ENCODE measurements at regions of chr4 and their contacts with region 1.

Region 1: DNA sequence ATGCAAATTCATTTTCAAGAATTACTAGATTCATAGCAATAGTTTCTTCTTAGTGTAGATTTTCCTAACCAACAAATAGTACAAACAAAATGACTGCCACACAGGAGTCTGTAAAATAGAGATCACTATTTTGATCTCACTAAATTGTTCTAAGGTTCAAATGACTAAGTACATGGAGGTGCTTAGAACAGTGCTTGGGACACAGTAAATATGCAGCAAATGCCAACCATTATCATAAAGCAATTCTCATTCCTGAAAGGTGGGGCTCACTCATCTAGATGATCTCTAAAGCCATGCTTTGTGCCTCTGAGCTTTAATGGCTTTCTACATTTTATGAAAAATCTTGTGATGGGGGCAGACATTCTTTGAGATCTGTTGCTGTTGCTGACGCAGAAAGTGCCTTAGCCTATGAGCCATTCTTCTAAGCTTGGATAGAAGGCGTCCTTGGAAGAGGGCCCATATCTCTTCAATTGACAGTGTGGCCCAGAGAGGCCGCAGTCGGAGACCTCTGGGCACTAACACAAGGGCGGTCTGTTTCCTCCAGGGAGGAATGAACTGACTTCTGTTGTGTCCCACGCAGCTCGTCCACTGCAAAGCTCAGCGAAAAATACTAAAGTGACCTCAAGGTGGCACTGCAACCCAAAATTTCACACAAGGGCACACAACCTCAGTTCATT is 23.5 kb downstream of the TLR10 start:
- DNase-seq: peak; percentile 84
- ATAC-seq: no peak
- H3K4me3 ChIP-seq: no peak overlapping the region
- H3K4me3 Mint-ChIP-seq: peak overlapping the region; percentile 26
- H3K27ac ChIP-seq: peak overlapping the region; percentile 6 to 11
- H3K27ac Mint-ChIP-seq: peak overlapping the region; percentile 83
- H3K4me1 ChIP-seq: peaks cover 59 to 70% of the 10 kb centered on the region in 2 donors
- H3K4me1 Mint-ChIP-seq: peaks cover 57% of the 10 kb centered on the region
- H3K27me3 ChIP-seq: no peaks in the 10 kb centered on the region
- H3K27me3 Mint-ChIP-seq: no peaks in the 10 kb centered on the region
- CTCF ChIP-seq: peak; percentile 78

Region 2: DNA sequence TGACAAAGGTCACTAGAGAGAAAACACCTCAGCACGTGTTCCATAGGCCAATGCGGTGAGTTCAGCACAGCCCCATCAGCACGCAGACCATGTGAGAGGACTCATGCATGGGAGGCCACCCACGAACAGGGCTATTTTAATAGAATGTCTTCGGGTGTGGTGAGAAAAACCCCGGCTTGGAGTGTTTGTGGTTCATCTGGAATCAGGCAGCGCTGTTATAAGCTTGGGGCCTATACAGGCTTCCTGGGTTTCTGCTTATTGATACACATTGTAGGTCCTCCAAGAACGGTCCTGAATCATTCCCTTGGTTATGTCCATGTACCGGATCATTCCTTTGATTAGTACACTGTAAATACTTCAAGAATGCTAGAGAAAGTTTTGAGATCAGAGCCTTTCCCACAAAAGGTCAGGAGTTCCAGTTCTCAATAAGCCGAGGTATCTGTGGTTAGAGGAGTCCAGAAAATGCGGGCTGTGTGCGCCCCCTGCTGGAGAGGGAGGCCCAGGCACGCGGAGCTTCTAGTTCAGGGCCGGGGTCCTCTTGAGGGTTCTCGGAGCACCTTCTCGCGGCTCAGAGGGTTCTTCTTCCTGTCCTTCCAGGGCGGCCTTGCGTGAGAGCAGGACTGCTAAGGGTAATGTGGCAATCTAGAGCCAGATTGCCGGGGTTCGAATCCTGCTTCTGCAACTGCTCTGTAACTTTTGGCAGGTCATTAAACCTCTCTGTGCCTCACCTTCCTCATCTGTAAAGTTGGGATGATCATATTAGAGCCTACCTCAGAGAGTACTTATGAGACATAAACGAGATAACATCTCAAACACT is 28.2 kb before region 1 on chr4:
- CTCF ChIA-PET with region 1: interaction called, 11 read pairs
- POLR2A ChIA-PET with region 1: interaction called, 6 read pairs
- intact Hi-C with region 1: no loop called
- DNase-seq: peak; percentile 88
- ATAC-seq: peak; percentile 83
- H3K4me3 ChIP-seq: peak overlapping the region in 1 of 5 experiments; percentile 10
- H3K4me3 Mint-ChIP-seq: peak overlapping the region; percentile 69
- H3K27ac ChIP-seq: peak overlapping the region; percentile 32 to 40
- H3K27ac Mint-ChIP-seq: peak overlapping the region; percentile 75
- H3K4me1 ChIP-seq: peaks cover 13 to 27% of the 10 kb centered on the region in 2 donors
- H3K4me1 Mint-ChIP-seq: peaks cover 33% of the 10 kb centered on the region
- H3K27me3 ChIP-seq: no peaks in the 10 kb centered on the region
- H3K27me3 Mint-ChIP-seq: no peaks in the 10 kb centered on the region
- CTCF ChIP-seq: peak; percentile 92

Region 3: GRCh38 chr4:38804654-38805295 is 45.5 kb after region 1 on chr4 and contains the start of gene TLR1:
- CTCF ChIA-PET with region 1: interaction called, 180 read pairs
- POLR2A ChIA-PET with region 1: interaction called, 26 read pairs
- intact Hi-C with region 1: loop called (anchors 1 kb)
- DNase-seq: peak; percentile 85
- ATAC-seq: peak; percentile 52
- H3K4me3 ChIP-seq: peak within 1 kb of the TSS; percentile 57 to 97 (median 70)
- H3K4me3 Mint-ChIP-seq: peak within 1 kb of the TSS; percentile 80
- H3K27ac ChIP-seq: peak within 1 kb of the TSS; percentile 72 to 97
- H3K27ac Mint-ChIP-seq: peak within 1 kb of the TSS; percentile 95
- H3K4me1 ChIP-seq: peaks cover 32 to 45% of the 10 kb centered on the region in 2 donors
- H3K4me1 Mint-ChIP-seq: peaks cover 56% of the 10 kb centered on the region
- H3K27me3 ChIP-seq: no peaks in the 10 kb centered on the region
- H3K27me3 Mint-ChIP-seq: no peaks in the 10 kb centered on the region
- CTCF ChIP-seq: peak; percentile 75
- total RNA-seq, gene TLR1: 50.8 and 54.1 TPM in 2 replicates

Region 4: DNA sequence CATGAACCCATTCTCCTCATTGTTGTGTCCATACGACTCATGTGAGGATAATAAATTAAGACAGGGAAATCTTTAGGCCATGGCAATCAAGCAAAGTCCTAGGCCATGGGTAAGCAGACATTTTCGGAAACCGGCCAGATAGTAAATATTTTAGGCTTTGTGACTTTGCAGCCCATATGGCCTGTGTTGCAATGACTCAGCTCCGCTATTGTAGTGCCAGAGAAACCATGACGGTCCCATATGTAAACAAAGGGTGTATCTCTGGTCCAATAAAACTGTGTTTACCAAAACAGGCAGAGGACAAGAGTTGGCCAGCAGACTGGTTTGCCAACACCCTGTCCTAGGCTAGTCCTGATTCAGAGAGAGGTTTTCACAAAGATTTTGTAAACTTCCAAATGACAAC is 113.4 kb after region 1 on chr4:
- CTCF ChIA-PET with region 1: interaction called, 25 read pairs
- POLR2A ChIA-PET with region 1: no interaction called
- intact Hi-C with region 1: no loop called
- DNase-seq: no peak
- ATAC-seq: no peak
- H3K4me3 ChIP-seq: no peak overlapping the region
- H3K4me3 Mint-ChIP-seq: no peak overlapping the region
- H3K27ac ChIP-seq: no peak overlapping the region
- H3K27ac Mint-ChIP-seq: no peak overlapping the region
- H3K4me1 ChIP-seq: peaks cover 4 to 7% of the 10 kb centered on the region in 2 donors
- H3K4me1 Mint-ChIP-seq: peaks cover 7% of the 10 kb centered on the region
- H3K27me3 ChIP-seq: no peaks in the 10 kb centered on the region
- H3K27me3 Mint-ChIP-seq: no peaks in the 10 kb centered on the region
- CTCF ChIP-seq: no peak

Region 5: DNA sequence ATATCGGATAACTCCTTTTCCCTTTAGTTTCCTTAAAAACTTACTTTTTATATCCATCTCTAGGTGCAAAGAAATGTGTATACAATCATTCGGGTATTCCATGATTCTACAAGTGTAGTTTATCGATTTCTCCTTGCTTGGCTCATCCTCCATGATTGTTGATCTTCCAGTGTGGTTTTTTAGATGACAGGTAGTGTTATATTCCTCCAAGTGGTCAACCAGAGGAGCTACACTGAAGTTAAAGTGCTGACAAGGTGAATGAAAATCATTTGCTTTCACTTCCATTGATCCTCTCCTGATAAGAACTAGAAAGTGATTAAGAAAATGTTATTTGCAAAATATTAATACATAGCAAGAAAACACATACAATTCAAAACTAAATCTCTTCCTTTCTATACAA is 234.4 kb after region 1 on chr4:
- CTCF ChIA-PET with region 1: no interaction called
- POLR2A ChIA-PET with region 1: no interaction called
- intact Hi-C with region 1: loop called (anchors 1 kb)
- DNase-seq: no peak
- ATAC-seq: no peak
- H3K4me3 ChIP-seq: no peak overlapping the region
- H3K4me3 Mint-ChIP-seq: no peak overlapping the region
- H3K27ac ChIP-seq: peak overlapping the region in 1 of 2 donors; percentile 31
- H3K27ac Mint-ChIP-seq: peak overlapping the region; percentile 3
- H3K4me1 ChIP-seq: no peaks in the 10 kb centered on the region
- H3K4me1 Mint-ChIP-seq: peaks cover 20% of the 10 kb centered on the region
- H3K27me3 ChIP-seq: no peaks in the 10 kb centered on the region
- H3K27me3 Mint-ChIP-seq: no peaks in the 10 kb centered on the region
- CTCF ChIP-seq: no peak

Region 6: DNA sequence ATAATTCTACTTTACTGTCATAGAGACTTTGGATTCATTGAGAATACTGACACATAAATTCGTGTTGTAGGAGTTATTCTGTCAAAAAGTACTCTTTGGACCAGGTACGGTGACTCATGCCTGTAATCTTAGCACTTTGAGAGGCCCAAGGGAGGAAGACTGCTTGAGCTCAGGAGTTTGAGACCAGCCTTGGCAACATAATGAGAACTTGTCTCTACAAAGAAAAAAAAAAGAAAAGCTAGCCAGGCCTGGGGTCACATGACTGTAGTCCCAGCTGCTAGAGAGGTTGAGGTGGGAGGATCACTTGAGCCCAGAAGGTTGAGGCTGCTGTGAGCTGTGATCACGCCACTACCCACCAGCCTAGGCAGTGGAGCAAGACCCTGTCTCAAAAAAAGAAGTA is 477.9 kb after region 1 on chr4:
- CTCF ChIA-PET with region 1: no interaction called
- POLR2A ChIA-PET with region 1: no interaction called
- intact Hi-C with region 1: no loop called
- DNase-seq: no peak
- ATAC-seq: no peak
- H3K4me3 ChIP-seq: no peak overlapping the region
- H3K4me3 Mint-ChIP-seq: no peak overlapping the region
- H3K27ac ChIP-seq: no peak overlapping the region
- H3K27ac Mint-ChIP-seq: no peak overlapping the region
- H3K4me1 ChIP-seq: no peaks in the 10 kb centered on the region
- H3K4me1 Mint-ChIP-seq: no peaks in the 10 kb centered on the region
- H3K27me3 ChIP-seq: no peaks in the 10 kb centered on the region
- H3K27me3 Mint-ChIP-seq: no peaks in the 10 kb centered on the region
- CTCF ChIP-seq: no peak

Region 7: GRCh38 chr4:39638354-39639240 is 879.3 kb after region 1 on chr4 and contains the start of gene SMIM14:
- CTCF ChIA-PET with region 1: no interaction called
- POLR2A ChIA-PET with region 1: no interaction called
- intact Hi-C with region 1: loop called (anchors 5 kb)
- DNase-seq: peak; percentile 93
- ATAC-seq: peak; percentile 80
- H3K4me3 ChIP-seq: peak within 1 kb of the TSS; percentile 79 to 98 (median 93)
- H3K4me3 Mint-ChIP-seq: peak within 1 kb of the TSS; percentile 91
- H3K27ac ChIP-seq: peak within 1 kb of the TSS; percentile 87 to 92
- H3K27ac Mint-ChIP-seq: peak within 1 kb of the TSS; percentile 91
- H3K4me1 ChIP-seq: peaks cover 39% of the 10 kb centered on the region in 2 donors
- H3K4me1 Mint-ChIP-seq: peaks cover 56% of the 10 kb centered on the region
- H3K27me3 ChIP-seq: no peaks in the 10 kb centered on the region
- H3K27me3 Mint-ChIP-seq: no peaks in the 10 kb centered on the region
- CTCF ChIP-seq: no peak
- total RNA-seq, gene SMIM14: 43.5 and 56.0 TPM in 2 replicates

Measured in B cell (primary cell).